ENCODE measurements at regions of chr6 and their contacts with region 1.

Region 1: DNA sequence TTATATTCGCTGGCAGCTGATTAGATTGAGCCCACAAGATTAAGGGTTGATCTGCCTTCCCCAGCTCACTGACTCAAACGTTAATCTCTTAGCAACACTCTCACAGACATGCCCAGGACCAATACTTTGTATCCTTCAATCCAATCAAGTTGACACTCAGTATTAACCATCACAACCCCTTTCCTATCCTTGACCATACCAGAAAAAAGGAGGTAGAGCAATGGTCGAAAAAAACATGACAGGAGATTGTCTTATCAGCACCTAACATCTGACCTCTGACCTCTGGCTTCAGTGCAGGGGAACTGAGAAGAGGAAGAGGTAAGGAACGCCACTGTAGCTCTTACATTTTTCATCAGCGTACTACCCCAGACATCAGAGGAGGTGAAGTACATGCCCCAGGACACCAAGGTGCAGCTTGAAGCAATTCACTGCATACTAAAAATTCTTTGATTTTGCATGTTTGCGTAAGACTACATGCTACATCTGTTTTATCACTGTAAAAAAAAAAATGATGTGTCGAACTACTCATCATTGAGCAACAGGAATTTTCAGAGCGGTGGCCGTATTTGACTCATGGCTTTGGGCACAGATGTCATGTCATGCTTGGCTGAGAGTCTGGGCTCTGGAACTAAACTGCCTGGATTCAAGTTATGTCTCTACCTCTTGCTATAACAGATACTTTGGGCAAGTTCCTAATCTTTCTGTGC is 188.0 kb upstream of the TAB2 start:
- DNase-seq: no peak
- ATAC-seq: peak; percentile 62
- H3K4me3 ChIP-seq: no peak overlapping the region
- H3K4me3 Mint-ChIP-seq: peak overlapping the region in 6 of 10 donors; percentile 2 to 66 (median 30)
- H3K27ac ChIP-seq: peak overlapping the region; percentile 45
- H3K27ac Mint-ChIP-seq: peak overlapping the region; percentile 76 to 99 (median 91)
- H3K4me1 ChIP-seq: peaks cover 28 to 47% of the 10 kb centered on the region in 2 donors
- H3K4me1 Mint-ChIP-seq: peaks cover 40 to 83% (median 79%) of the 10 kb centered on the region in 7 donors
- H3K27me3 ChIP-seq: no peaks in the 10 kb centered on the region
- H3K27me3 Mint-ChIP-seq: no peaks in the 10 kb centered on the region

Region 2: DNA sequence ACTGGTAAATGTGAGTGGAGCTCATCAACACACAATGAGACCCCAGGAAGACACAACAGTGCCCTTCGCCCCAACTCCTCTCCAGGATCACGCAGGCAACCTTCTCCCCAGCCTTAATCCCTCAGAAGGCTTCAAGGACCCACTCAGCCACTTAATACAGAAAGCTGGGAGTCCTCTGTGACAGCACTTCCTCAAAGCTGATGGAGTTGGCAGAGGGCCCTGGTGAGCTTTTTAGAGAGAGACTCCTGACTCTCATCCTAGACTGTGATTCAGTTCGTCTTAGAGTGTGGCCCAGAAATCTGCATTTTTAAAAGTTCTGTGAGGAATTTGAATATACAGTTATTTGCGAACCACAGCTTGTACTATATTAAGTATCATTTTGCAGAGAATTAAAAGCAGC is 195.0 kb before region 1 on chr6:
- CTCF ChIA-PET with region 1: no interaction called
- POLR2A ChIA-PET with region 1: no interaction called
- intact Hi-C with region 1: no loop called
- DNase-seq: no peak
- ATAC-seq: no peak
- H3K4me3 ChIP-seq: no peak overlapping the region
- H3K4me3 Mint-ChIP-seq: no peak overlapping the region
- H3K27ac ChIP-seq: no peak overlapping the region
- H3K27ac Mint-ChIP-seq: no peak overlapping the region
- H3K4me1 ChIP-seq: no peaks in the 10 kb centered on the region
- H3K4me1 Mint-ChIP-seq: no peaks in the 10 kb centered on the region
- H3K27me3 ChIP-seq: no peaks in the 10 kb centered on the region
- H3K27me3 Mint-ChIP-seq: peaks cover 4 to 44% (median 6%) of the 10 kb centered on the region in 5 donors

Region 3: DNA sequence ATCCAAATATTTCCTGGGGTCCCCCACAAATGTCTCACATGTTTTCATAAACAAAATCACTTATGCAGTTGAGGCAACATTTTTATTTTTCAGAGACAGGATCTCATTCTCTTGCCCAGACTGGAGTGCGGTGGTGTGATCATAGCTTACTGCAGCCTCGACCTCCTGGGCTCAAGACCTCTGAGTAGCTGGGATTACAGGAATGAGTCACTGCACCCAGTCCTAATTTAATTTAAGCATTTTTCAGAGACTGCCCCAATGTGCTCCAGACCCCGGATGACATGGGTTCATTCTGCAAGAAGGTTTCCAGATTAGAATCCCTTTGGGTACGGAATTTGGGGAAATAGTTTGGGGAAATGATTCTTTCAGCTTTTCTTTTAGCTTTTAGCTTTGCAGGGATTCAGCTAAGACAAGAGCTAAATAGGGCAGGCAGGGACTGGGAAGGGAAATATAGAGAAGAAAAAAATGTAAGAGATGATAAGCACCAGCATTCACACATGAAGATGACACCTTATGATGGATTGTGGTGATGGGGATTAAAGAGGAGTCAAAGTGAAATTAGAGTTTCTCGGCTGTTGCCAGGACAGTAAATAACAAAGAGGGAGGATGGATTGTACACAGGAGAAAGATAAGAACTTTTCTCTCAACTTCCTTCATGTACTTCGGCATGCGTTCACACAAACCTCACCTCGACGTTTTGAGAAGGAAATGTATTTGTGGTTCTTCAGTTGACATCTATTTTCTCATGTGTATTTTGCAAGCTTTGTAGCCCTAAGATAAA is 18.6 kb after region 1 on chr6:
- CTCF ChIA-PET with region 1: interaction called, 4 read pairs
- POLR2A ChIA-PET with region 1: interaction called, 6 read pairs
- intact Hi-C with region 1: loop called in 1 of 2 experiments (anchors 2 kb)
- DNase-seq: peak in 7 of 9 donors; percentile 31 to 82 (median 56)
- ATAC-seq: peak; percentile 91
- H3K4me3 ChIP-seq: no peak overlapping the region
- H3K4me3 Mint-ChIP-seq: peak overlapping the region in 7 of 10 donors; percentile 7 to 69 (median 54)
- H3K27ac ChIP-seq: peak overlapping the region; percentile 64
- H3K27ac Mint-ChIP-seq: peak overlapping the region; percentile 80 to 97 (median 85)
- H3K4me1 ChIP-seq: peaks cover 26 to 29% of the 10 kb centered on the region in 2 donors
- H3K4me1 Mint-ChIP-seq: peaks cover 35 to 88% (median 55%) of the 10 kb centered on the region in 7 donors
- H3K27me3 ChIP-seq: no peaks in the 10 kb centered on the region
- H3K27me3 Mint-ChIP-seq: no peaks in the 10 kb centered on the region

Region 4: GRCh38 chr6:149154261-149154821 is 24.8 kb after region 1 on chr6:
- CTCF ChIA-PET with region 1: no interaction called
- POLR2A ChIA-PET with region 1: interaction called, 3 read pairs
- intact Hi-C with region 1: loop called in 1 of 2 experiments (anchors 2 kb)
- DNase-seq: no peak
- ATAC-seq: no peak
- H3K4me3 ChIP-seq: no peak overlapping the region
- H3K4me3 Mint-ChIP-seq: peak overlapping the region in 5 of 10 donors; percentile 5 to 68 (median 40)
- H3K27ac ChIP-seq: no peak overlapping the region
- H3K27ac Mint-ChIP-seq: peak overlapping the region; percentile 9 to 98 (median 76)
- H3K4me1 ChIP-seq: peaks cover 13 to 23% of the 10 kb centered on the region in 2 donors
- H3K4me1 Mint-ChIP-seq: peaks cover 30 to 65% (median 39%) of the 10 kb centered on the region in 7 donors
- H3K27me3 ChIP-seq: no peaks in the 10 kb centered on the region
- H3K27me3 Mint-ChIP-seq: no peaks in the 10 kb centered on the region